ENCODE measurements at regions of chr18 and their contacts with region 1.

Region 1: GRCh38 chr18:11937874-11938478 is 29.9 kb upstream of the MPPE1 start:
- DNase-seq: no peak
- H3K4me3 ChIP-seq: no peak overlapping the region
- H3K27ac ChIP-seq: no peak overlapping the region
- H3K27me3 ChIP-seq: no peaks in the 10 kb centered on the region
- CTCF ChIP-seq: peak; percentile 83

Region 2: GRCh38 chr18:11183637-11184036 is 754.3 kb before region 1 on chr18:
- CTCF ChIA-PET with region 1: no interaction called
- POLR2A ChIA-PET with region 1: no interaction called
- DNase-seq: no peak
- H3K4me3 ChIP-seq: no peak overlapping the region
- H3K27ac ChIP-seq: no peak overlapping the region
- H3K27me3 ChIP-seq: no peaks in the 10 kb centered on the region
- CTCF ChIP-seq: no peak

Region 3: GRCh38 chr18:11654736-11655605 is 283.0 kb before region 1 on chr18:
- CTCF ChIA-PET with region 1: interaction called, 20 read pairs
- POLR2A ChIA-PET with region 1: no interaction called
- DNase-seq: no peak
- H3K4me3 ChIP-seq: no peak overlapping the region
- H3K27ac ChIP-seq: no peak overlapping the region
- H3K27me3 ChIP-seq: peaks cover 4% of the 10 kb centered on the region
- CTCF ChIP-seq: peak; percentile 74

Region 4: GRCh38 chr18:11925800-11926481 is 12.0 kb before region 1 on chr18:
- CTCF ChIA-PET with region 1: interaction called, 35 read pairs
- POLR2A ChIA-PET with region 1: no interaction called
- DNase-seq: no peak
- H3K4me3 ChIP-seq: no peak overlapping the region
- H3K27ac ChIP-seq: no peak overlapping the region
- H3K27me3 ChIP-seq: peaks cover 8% of the 10 kb centered on the region
- CTCF ChIP-seq: no peak

Region 5: DNA sequence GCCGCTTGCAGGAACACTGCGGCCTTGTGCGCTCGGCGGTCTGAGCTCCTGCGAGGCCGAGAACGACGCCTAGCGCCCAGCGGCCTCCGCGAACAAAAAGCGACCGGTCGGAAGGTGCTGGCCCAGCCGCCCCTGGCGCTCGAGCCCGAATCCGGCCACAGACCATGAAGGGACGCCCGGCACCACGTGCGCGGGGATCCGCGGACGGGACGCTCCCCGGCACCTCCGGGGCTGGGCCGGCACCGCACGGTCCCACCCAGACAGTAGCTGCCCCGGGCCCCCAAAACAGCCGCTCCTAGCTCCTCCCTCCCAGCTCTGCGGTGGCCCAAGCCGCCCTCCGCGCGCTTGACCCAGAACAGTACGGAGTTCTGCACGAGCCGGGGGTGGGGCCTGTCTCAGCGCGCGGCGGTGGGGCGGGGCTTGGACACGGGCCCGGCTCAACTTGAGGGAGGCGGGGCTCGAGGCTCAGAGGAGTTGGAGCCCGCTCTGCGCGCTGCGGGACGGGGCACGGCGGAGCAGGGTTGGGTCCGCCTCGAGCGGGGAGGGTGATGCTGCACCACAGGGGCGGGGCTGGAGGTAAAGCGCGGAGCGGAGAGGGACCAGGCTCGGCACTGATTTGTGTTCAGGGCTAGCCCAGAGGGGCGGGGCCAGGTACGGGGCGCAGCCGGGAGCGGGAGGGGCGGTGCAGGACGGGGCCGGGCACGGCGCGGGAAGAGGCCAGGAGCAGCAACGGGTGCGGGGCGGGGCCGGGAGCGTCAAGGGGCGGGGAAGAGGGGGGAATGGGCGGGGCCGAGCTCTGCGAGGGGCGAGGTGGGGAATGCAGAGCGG is 42.8 kb after region 1 on chr18:
- CTCF ChIA-PET with region 1: interaction called, 56 read pairs
- POLR2A ChIA-PET with region 1: interaction called, 6 read pairs
- DNase-seq: peak; percentile 95
- H3K4me3 ChIP-seq: peak overlapping the region; percentile 68
- H3K27ac ChIP-seq: peak overlapping the region; percentile 87
- H3K27me3 ChIP-seq: no peaks in the 10 kb centered on the region
- CTCF ChIP-seq: peak; percentile 29; the same call in 1 of the 2 replicates

Region 6: GRCh38 chr18:12011957-12012549 is 74.1 kb after region 1 on chr18:
- CTCF ChIA-PET with region 1: interaction called, 11 read pairs
- POLR2A ChIA-PET with region 1: no interaction called
- DNase-seq: no peak
- H3K4me3 ChIP-seq: no peak overlapping the region
- H3K27ac ChIP-seq: no peak overlapping the region
- H3K27me3 ChIP-seq: no peaks in the 10 kb centered on the region
- CTCF ChIP-seq: no peak

Region 7: GRCh38 chr18:12038639-12039417 is 100.9 kb after region 1 on chr18:
- CTCF ChIA-PET with region 1: interaction called, 101 read pairs
- POLR2A ChIA-PET with region 1: no interaction called
- DNase-seq: peak; percentile 41
- H3K4me3 ChIP-seq: peak overlapping the region; percentile 63
- H3K27ac ChIP-seq: no peak overlapping the region
- H3K27me3 ChIP-seq: no peaks in the 10 kb centered on the region
- CTCF ChIP-seq: peak; percentile 93

Region 8: DNA sequence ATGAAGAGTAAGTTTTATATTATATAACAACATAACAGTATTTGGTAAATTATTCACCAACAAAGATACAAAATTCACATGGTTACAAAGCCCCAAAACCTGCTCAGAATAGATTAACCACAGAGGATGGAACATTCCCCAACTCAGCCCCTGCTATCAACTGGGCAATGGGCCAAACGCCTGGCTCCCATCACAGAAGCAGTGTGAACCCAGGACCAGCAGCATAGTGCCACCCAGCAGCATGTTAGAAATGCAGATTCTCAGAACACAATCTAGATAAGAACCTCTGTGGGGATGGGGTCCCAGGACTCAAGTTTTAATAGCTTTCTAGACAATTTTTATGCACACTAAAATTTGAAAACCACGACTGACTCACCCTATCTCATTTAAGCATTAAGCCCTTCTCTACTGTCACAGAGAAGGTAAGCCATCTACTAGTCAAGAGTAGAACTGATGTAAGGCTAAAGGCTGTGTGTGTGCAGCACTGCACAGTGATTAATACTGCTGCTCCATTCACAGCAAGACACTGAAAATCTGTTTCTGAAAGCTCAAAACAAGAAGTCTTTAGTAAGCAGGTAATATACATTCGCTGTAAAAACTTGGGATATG is 423.9 kb after region 1 on chr18:
- CTCF ChIA-PET with region 1: no interaction called
- POLR2A ChIA-PET with region 1: no interaction called
- DNase-seq: no peak
- H3K4me3 ChIP-seq: no peak overlapping the region
- H3K27ac ChIP-seq: no peak overlapping the region
- H3K27me3 ChIP-seq: no peaks in the 10 kb centered on the region
- CTCF ChIP-seq: no peak